ENCODE measurements at regions of chr21 and their contacts with region 1.

Region 1: DNA sequence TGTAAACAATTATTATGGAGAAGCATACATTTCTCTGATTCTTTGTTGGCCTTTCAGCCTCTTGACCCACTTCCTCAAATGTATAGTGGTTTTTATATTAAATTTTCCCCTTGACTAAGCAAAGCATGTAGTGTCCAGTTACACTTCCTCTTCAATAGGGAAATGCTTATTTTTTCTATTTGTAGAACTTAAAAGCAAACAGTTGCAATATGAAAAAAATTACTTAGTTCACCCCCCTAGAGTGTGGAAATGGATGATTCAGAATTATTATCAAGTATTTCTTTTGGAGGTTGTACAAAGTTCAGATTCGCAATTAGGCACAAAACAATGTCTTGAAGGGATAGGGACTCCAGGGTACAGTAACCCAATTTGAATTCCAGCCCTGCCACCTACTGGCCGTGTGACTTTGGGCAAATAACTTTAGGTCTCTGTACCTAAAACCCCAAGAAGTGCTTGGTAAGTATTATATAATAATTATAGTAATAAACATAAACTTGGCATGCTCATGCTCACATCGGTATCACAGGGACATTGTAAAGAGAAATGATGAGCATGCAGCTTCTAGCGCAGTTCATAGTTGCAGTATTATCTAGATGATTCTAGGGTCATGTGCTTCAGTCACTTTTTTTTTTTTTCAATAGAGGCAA is 28.6 kb upstream of the IFNGR2 start:
- DNase-seq: peak in 2 of 3 donors; percentile 57 to 77
- ATAC-seq: peak; percentile 83
- H3K4me3 ChIP-seq: no peak overlapping the region
- H3K27ac ChIP-seq: no peak overlapping the region
- H3K4me1 ChIP-seq: peaks cover 3% of the 10 kb centered on the region
- H3K27me3 ChIP-seq: no peaks in the 10 kb centered on the region

Region 2: DNA sequence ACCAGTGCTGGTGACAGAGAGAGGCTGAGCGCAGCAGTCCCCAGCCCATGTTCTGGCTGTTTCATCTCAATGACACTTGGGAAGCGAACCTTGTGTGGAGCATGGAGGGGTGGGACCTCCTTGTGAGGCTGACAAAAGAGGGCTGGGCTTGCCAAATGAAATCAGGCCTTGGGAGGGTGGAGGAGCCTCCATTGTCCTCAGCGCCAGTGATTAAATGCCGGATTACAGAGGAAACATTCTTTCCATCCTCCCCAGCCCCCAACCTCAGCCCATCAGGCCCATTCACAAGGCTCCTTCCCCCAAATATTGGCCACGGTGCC is 539.7 kb before region 1 on chr21:
- intact Hi-C with region 1: loop called in 1 of 4 experiments (anchors 10 kb)
- DNase-seq: no peak
- ATAC-seq: no peak
- H3K4me3 ChIP-seq: no peak overlapping the region
- H3K27ac ChIP-seq: no peak overlapping the region
- H3K4me1 ChIP-seq: no peaks in the 10 kb centered on the region
- H3K27me3 ChIP-seq: no peaks in the 10 kb centered on the region

Measured in right cardiac atrium (tissue), 5 donors.